ENCODE measurements at regions of chr6 and their contacts with region 1.

Region 1: GRCh38 chr6:125821825-125822281 is 31.1 kb downstream of the NCOA7 start:
- DNase-seq: no peak
- H3K27ac ChIP-seq: no peak overlapping the region
- CTCF ChIP-seq: no peak

Region 2: GRCh38 chr6:125714441-125715090 is 107.3 kb before region 1 on chr6:
- CTCF ChIA-PET with region 1: no interaction called
- POLR2A ChIA-PET with region 1: no interaction called
- DNase-seq: no peak
- H3K27ac ChIP-seq: no peak overlapping the region
- CTCF ChIP-seq: no peak

Region 3: GRCh38 chr6:125834348-125834747 is 12.5 kb after region 1 on chr6:
- CTCF ChIA-PET with region 1: no interaction called
- POLR2A ChIA-PET with region 1: interaction called, 10 read pairs
- DNase-seq: no peak
- H3K27ac ChIP-seq: no peak overlapping the region
- CTCF ChIP-seq: no peak